Right ventricle myocardium inferior (tissue), 1 donor: ENCODE measurements at regions of chr10 and their contacts with region 1.

Region 1: DNA sequence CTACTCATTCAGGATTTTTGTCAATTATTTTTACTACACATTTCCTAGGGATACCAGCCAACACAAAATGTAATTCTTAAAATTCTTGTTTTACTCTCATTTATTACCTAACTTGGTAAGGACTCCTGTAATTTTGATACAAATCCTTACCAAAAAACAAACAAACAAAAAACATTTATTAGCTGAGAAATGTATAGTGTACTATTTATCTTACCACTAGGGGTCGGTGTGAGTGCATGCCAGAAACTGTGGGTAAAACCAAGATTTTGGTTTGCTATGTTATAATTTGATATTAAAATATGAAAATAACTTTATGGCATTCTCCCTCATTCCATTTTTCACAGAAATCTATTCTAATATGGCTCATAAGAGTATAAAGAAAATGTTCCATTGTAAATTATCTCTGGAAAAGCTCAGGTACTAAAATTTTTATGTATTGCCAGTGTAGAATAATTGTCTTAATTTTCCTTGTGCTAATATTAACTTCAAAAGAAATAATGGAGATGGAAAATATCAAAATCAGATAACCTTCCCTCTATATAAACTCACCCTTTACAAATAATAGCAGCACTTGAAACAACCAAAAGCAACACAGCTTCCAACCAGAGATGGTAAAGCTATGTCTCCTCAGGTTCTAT is 290.8 kb upstream of the PCDH15 start:
- DNase-seq: no peak
- ATAC-seq: no peak

Region 2: GRCh38 chr10:55019439-55019838 is 72.4 kb before region 1 on chr10:
- intact Hi-C with region 1: no loop called
- DNase-seq: no peak
- ATAC-seq: peak; percentile 42

Region 3: GRCh38 chr10:55263327-55263726 is 171.5 kb after region 1 on chr10:
- intact Hi-C with region 1: loop called (anchors 10 kb)
- DNase-seq: no peak
- ATAC-seq: no peak

Region 4: GRCh38 chr10:55500932-55501559 is 409.2 kb after region 1 on chr10:
- intact Hi-C with region 1: loop called (anchors 5 kb)
- DNase-seq: no peak
- ATAC-seq: no peak